OCI-LY7 (cell line): ENCODE measurements at regions of chr11 and their contacts with region 1.

Region 1: DNA sequence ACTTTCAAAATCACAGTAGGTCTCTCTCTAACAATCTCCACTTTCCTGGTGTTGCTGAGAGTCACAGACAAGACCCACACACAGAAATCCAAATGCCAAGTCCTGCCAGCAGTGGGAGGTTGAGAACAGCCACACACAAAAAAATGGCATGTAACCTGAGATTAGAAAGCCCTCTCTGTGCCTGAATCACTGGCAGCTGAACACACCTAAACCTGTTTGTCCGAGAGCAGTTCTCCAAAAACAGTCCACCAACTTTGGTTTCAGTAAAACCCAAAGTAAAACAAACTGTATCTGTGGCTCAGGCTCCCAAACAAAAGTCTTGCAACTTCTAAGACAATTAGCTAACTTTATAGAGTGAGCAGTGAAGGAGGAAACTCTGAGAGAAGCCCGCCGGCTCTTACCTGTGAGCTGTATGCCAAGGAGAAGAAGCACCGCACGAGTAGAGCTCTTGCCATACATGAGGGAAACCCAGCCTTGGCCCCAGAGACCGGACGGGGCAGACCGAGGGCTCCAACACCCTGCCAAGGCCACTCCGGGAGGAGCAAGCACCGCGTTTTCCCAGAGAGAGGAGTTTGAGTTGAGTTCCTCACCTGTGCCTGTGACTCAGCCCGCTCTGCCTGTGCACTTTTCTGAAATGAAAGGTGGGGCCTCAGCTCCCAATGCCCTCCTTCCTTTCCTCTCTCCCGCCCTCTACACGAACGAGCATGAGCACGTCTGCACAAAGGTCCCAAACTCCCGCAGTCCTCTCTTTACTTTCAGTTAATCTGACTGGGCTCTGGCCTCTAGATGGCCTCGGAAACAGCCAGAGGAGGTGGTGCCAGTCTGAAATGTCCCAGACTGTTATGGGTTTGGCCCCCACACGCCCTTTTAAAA is at the start of gene MPZL2:
- DNase-seq: no peak
- H3K4me3 ChIP-seq: no peak within 1 kb of the TSS
- H3K27ac ChIP-seq: no peak within 1 kb of the TSS
- H3K4me1 ChIP-seq: peaks cover 8% of the 10 kb centered on the region
- CTCF ChIP-seq: 0 out of 2 replicates have a peak, but pooled peaks have one; percentile 12
- total RNA-seq, gene MPZL2: not detected in 2 replicates

Region 2: DNA sequence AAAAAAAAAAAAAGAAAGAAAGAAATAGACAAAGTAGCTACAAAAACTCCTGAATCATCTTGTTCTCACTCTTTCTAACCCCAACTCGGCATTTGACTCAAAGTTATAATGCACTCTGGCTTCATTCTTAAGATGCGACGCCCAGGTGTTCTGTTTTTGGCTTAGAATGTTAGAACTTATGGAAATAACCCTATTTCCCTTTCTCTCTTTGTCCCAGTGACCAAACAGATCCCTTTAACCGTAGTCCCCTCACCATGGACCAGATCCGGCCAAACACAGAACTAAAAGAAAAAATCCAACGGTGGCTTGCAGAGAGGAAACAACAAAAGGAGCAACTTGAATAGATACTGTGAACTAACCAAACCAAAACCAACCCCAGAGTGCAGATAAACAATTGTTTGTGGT is 132.2 kb after region 1 on chr11:
- CTCF ChIA-PET with region 1: no interaction called
- POLR2A ChIA-PET with region 1: interaction called, 10 read pairs
- intact Hi-C with region 1: no loop called
- DNase-seq: no peak
- H3K4me3 ChIP-seq: no peak overlapping the region
- H3K27ac ChIP-seq: no peak overlapping the region
- H3K4me1 ChIP-seq: peaks cover 28% of the 10 kb centered on the region
- CTCF ChIP-seq: no peak